ENCODE measurements at regions of chr14 and their contacts with region 1.

Region 1: DNA sequence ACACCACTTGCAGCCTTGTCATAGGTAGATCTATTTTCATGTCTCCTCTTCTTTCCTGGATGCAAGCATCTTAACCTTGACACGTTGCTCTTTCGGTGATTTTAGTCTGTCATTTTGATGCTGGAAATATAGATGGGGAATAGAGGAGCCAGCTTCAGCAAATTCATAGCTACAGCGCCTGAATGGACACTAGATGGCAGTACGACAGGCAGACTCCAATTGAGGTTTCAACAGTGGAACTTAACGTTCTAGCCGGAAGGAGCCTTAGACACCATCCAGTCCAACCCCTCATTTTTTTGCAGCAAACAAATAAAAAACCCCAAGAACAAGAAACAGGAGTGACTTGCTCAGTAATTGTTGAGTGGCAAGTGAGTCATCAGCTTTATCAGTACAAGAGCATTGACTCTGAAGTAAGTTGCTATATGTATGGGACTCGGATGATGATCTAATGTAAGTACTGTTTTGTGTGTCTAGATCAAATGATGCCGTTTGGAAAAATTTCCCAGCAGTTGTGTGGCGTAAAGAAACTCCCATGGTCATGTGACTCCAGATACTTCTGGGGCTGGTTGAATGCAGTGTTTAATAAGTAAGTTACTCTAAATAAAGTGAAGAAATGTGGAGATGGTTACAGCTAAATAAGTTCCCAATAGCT is 9.0 kb downstream of the DMAC2L start:
- DNase-seq: peak; percentile 54 to 87 (median 73)
- H3K4me3 ChIP-seq: peak overlapping the region in 1 of 4 donors; percentile 30
- H3K27ac ChIP-seq: peak overlapping the region in 4 of 5 donors; percentile 38 to 78 (median 64)
- H3K4me1 ChIP-seq: peaks cover 7 to 18% of the 10 kb centered on the region in 2 donors
- H3K27me3 ChIP-seq: no peaks in the 10 kb centered on the region
- CTCF ChIP-seq: peak; percentile 78 to 88 (median 83)
- POLR2A ChIP-seq: no peak

Region 2: GRCh38 chr14:49920935-49921334 is 400.2 kb before region 1 on chr14:
- intact Hi-C with region 1: no loop called
- DNase-seq: no peak
- H3K4me3 ChIP-seq: no peak overlapping the region
- H3K27ac ChIP-seq: no peak overlapping the region
- H3K4me1 ChIP-seq: no peaks in the 10 kb centered on the region
- H3K27me3 ChIP-seq: no peaks in the 10 kb centered on the region
- CTCF ChIP-seq: no peak
- POLR2A ChIP-seq: no peak

Region 3: DNA sequence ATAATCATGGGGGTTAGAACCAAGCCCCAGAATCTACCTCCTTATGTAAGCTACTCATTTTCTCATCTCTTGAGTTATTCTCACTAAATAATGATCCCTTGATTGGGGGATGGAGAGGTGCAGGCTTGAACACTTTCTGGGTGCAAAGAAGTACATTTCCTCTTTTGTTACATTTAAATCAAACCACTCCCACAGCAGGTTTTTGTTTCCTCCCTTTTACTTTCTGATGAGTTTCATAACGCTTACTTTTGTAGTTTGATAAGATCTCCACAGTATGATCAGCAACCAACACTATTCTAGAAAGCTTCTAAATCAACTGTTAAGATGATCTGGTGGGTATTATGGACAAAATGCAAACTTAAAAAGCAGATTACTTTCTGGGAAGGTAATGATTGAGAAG is 225.2 kb before region 1 on chr14:
- intact Hi-C with region 1: no loop called
- DNase-seq: no peak
- H3K4me3 ChIP-seq: no peak overlapping the region
- H3K27ac ChIP-seq: no peak overlapping the region
- H3K4me1 ChIP-seq: no peaks in the 10 kb centered on the region
- H3K27me3 ChIP-seq: no peaks in the 10 kb centered on the region
- CTCF ChIP-seq: no peak
- POLR2A ChIP-seq: no peak

Region 4: DNA sequence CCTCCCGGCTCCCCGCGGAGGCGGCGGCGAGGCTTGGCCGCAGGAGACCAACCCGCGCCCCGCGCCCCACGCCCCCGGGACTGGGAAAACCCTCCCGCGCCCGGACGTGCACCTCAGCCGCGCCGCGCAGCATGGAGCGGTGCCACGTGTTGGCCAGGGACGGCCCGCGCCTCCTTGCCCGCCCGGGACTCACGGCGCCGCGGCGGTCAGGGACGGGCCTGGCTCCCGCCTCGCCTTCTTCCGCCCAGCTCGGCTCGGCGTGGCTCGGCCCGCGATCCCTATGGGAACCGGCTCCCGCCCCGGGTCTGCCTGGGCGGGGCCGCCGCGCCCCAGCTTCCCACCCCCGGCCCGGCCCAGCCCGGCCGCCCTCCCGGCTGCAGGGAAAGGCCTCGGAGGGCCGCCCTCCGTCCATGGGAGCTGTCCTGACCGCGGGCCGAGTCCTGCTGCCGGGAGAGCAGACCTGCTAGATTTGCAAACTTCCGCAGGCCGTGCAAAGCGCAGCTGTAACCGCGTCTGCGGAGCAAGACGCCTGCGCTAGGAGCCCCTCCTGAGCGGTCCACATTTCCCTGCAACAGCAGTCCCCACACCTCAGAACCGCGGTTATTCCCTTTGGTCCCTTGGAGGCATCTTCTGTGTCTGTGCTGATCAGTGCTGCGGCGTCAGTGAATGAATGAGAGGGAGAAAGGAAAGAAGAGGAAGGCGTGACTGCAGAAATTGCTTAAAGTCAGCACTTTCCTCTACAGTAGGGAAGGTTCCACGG is 75.7 kb after region 1 on chr14 and contains the start of gene CDKL1:
- intact Hi-C with region 1: loop called in 1 of 2 experiments (anchors 10 kb)
- DNase-seq: peak; percentile 63 to 74 (median 70)
- H3K4me3 ChIP-seq: peak within 1 kb of the TSS; percentile 19 to 83 (median 40)
- H3K27ac ChIP-seq: peak within 1 kb of the TSS in 4 of 5 donors; percentile 78 to 90 (median 80)
- H3K4me1 ChIP-seq: peaks cover 0 to 5% of the 10 kb centered on the region in 2 donors
- H3K27me3 ChIP-seq: no peaks in the 10 kb centered on the region
- CTCF ChIP-seq: no peak
- POLR2A ChIP-seq: peak in 1 of 2 donors; percentile 54
- total RNA-seq, gene CDKL1: 1.8 to 17.2 (median 8.1) TPM

Region 5: DNA sequence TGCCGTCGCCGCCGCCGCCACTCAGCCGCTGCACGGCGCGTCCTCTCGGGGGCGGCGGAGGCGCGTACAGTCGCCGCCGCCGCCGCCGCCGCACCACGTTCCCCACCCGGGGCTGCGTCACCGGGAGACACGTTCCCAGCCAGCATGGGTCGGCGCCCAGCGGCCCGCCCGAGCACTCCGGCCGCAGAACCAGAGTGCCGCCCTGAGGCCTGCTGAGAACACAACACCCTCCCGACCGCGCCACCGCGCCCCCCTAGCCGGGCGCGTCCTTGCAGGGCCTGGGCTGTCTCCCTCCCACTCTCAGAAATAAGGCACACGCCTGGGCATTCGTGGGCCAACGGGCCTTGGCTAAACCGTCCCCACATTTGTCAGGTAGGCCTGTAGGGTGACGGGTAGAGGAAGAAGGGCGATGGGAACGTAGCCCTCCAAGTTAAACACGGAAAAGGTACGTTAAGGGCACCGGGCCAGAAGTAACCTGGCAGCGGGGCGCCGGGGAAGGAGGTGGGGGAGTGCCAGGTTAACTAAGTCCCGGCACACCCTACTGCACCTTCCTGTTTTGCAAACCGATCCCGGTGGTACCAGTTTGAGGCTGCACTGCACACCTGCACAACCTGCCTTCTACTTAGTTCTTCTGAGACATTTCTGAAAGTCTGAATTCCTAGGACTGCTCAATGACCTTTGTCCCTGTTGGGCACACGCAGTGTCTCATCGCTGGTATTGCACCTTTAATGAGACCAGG is 211.5 kb after region 1 on chr14 and contains the start of gene MAP4K5:
- intact Hi-C with region 1: loop called (anchors 5 kb)
- DNase-seq: peak; percentile 89 to 95 (median 92)
- H3K4me3 ChIP-seq: peak within 1 kb of the TSS; percentile 59 to 94 (median 73)
- H3K27ac ChIP-seq: peak within 1 kb of the TSS; percentile 58 to 98 (median 94)
- H3K4me1 ChIP-seq: peaks cover 13 to 33% of the 10 kb centered on the region in 2 donors
- H3K27me3 ChIP-seq: no peaks in the 10 kb centered on the region
- CTCF ChIP-seq: peak; percentile 76 to 99 (median 91)
- POLR2A ChIP-seq: peak in 1 of 2 donors; percentile 86
- total RNA-seq, gene MAP4K5: 19.7 to 205 (median 36.6) TPM